CD4-positive, alpha-beta T cell (primary cell): ENCODE measurements at regions of chr1 and their contacts with region 1.

Region 1: DNA sequence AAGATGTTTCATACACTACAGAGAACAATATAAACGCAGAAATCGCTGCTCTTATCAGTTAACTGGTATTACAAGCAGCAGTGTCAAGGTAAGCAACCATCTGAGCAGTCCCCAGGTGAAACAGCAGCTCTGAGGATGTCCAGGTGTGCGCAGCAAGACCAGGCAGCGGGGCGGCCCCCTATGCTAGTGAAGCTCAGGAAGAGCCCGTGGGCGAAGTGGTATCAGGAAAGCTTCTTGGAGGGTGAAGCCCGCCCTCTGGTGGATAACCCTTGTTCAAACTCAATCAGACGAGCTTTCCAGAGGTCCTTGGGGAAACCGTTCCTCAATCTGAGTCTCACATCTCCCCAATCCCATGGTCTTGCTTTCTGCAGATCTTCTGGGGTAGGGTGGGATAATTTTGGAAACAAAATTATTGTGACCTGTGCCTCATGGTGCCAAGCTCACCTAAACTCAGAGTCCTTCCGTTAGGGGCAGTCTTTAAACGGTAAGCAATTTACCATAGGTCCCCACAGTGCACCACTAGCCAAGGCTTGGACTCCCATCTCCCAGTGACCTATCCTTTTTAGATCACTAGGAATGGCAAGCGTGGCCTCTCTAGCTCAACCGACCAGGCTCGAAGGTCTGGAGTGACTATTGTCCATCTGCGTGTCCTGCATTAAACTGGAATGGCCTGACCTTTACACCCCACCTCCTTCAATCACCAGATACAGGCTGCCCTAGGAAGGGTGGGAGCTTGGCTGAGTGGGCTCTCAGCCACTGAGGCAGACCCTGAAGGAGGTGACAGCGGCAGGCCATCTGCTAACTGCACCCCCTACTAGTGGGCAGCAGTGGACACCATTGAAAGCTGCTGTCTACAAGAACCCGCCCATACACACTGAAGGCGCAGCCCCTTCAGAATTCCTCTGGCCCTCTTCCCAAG is 13.6 kb upstream of the FAM110D start:
- DNase-seq: peak; percentile 54 to 91 (median 74)
- ATAC-seq: peak; percentile 97
- H3K4me3 ChIP-seq: no peak overlapping the region
- H3K4me3 Mint-ChIP-seq: no peak overlapping the region
- H3K27ac ChIP-seq: no peak overlapping the region
- H3K27ac Mint-ChIP-seq: no peak overlapping the region
- H3K4me1 ChIP-seq: peaks cover 9% of the 10 kb centered on the region
- H3K4me1 Mint-ChIP-seq: peaks cover 6% of the 10 kb centered on the region
- H3K27me3 ChIP-seq: no peaks in the 10 kb centered on the region
- H3K27me3 Mint-ChIP-seq: no peaks in the 10 kb centered on the region
- CTCF ChIP-seq: peak; percentile 86

Region 2: DNA sequence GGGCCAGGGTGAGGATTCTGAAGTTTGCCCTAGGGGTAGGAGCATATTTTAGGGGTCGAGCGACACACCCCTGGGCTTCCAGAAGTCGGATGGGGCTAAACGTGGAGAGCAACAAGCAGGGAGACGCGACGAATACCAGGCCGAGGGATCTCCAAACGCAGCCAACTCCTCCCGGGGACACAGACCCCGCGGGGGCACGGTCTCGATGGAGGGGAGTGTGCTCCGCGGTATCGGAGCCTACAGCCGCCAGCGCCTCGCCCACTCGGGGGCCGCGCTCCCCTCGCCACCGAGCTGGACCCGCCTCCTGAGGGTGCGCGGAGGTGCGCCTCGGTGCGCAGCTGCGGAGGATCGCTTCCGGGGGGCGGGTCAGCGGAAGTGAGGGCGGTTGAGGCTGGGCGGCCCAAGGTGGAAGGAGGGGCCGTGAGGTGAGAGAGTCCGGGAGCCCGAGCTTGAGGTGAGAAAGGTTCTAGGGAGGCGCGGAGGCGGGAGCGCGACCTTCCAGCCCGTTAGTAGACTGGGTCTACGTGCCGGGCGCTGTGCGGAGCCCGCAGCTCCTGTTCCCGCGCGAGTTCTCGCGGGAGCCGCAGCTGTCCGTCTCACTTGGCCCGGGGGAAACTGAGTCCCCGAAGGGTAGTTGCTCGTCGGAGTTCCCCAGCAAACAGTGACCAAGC is 325.6 kb before region 1 on chr1 and contains the start of gene MTFR1L:
- CTCF ChIA-PET with region 1: no interaction called
- POLR2A ChIA-PET with region 1: no interaction called
- intact Hi-C with region 1: no loop called
- DNase-seq: peak; percentile 87 to 97 (median 93)
- ATAC-seq: peak; percentile 85
- H3K4me3 ChIP-seq: peak within 1 kb of the TSS; percentile 97
- H3K4me3 Mint-ChIP-seq: peak within 1 kb of the TSS; percentile 98
- H3K27ac ChIP-seq: peak within 1 kb of the TSS; percentile 88 to 89
- H3K27ac Mint-ChIP-seq: peak within 1 kb of the TSS; percentile 97
- H3K4me1 ChIP-seq: peaks cover 44% of the 10 kb centered on the region
- H3K4me1 Mint-ChIP-seq: peaks cover 49% of the 10 kb centered on the region
- H3K27me3 ChIP-seq: no peaks in the 10 kb centered on the region
- H3K27me3 Mint-ChIP-seq: no peaks in the 10 kb centered on the region
- CTCF ChIP-seq: no peak
- total RNA-seq, gene MTFR1L: 25.5 to 28.0 TPM

Region 3: GRCh38 chr1:26035959-26036755 is 109.1 kb before region 1 on chr1:
- CTCF ChIA-PET with region 1: interaction called, 9 read pairs
- POLR2A ChIA-PET with region 1: no interaction called
- intact Hi-C with region 1: loop called (anchors 1 kb)
- DNase-seq: peak; percentile 57 to 88 (median 72)
- ATAC-seq: peak; percentile 65
- H3K4me3 ChIP-seq: peak overlapping the region; percentile 99
- H3K4me3 Mint-ChIP-seq: peak overlapping the region; percentile 94
- H3K27ac ChIP-seq: peak overlapping the region; percentile 60 to 75
- H3K27ac Mint-ChIP-seq: peak overlapping the region; percentile 88
- H3K4me1 ChIP-seq: peaks cover 22% of the 10 kb centered on the region
- H3K4me1 Mint-ChIP-seq: peaks cover 17% of the 10 kb centered on the region
- H3K27me3 ChIP-seq: peaks cover 0 to 2% of the 10 kb centered on the region in 2 experiments
- H3K27me3 Mint-ChIP-seq: no peaks in the 10 kb centered on the region
- CTCF ChIP-seq: peak; percentile 100

Region 4: GRCh38 chr1:26046249-26047031 is 98.9 kb before region 1 on chr1:
- CTCF ChIA-PET with region 1: no interaction called
- POLR2A ChIA-PET with region 1: no interaction called
- intact Hi-C with region 1: no loop called
- DNase-seq: no peak
- ATAC-seq: no peak
- H3K4me3 ChIP-seq: no peak overlapping the region
- H3K4me3 Mint-ChIP-seq: no peak overlapping the region
- H3K27ac ChIP-seq: no peak overlapping the region
- H3K27ac Mint-ChIP-seq: no peak overlapping the region
- H3K4me1 ChIP-seq: peaks cover 2% of the 10 kb centered on the region
- H3K4me1 Mint-ChIP-seq: peaks cover 6% of the 10 kb centered on the region
- H3K27me3 ChIP-seq: peaks cover 56 to 59% of the 10 kb centered on the region in 2 experiments
- H3K27me3 Mint-ChIP-seq: peaks cover 82% of the 10 kb centered on the region
- CTCF ChIP-seq: no peak

Region 5: DNA sequence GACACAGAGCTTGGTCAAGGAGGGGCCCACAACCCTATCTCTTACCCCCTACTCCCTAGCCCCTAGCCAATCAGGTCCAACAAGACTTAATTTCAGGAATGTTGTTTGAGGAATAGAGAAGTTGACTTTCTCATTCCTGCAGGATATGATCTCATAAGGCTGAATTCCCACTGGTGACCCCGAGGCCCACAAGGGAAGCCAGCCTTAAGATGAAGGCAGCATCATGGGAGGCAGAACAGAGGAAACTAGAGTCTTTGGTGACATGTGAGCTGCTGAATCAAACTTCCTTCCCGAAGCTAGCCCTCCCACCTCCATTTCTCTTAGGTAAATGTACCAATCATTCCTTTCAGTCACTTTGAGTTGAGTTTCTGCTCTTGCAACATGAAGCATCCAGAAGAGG is 42.8 kb before region 1 on chr1:
- CTCF ChIA-PET with region 1: interaction called, 44 read pairs
- POLR2A ChIA-PET with region 1: interaction called, 25 read pairs
- intact Hi-C with region 1: loop called (anchors 1 kb)
- DNase-seq: no peak
- ATAC-seq: no peak
- H3K4me3 ChIP-seq: no peak overlapping the region
- H3K4me3 Mint-ChIP-seq: no peak overlapping the region
- H3K27ac ChIP-seq: no peak overlapping the region
- H3K27ac Mint-ChIP-seq: no peak overlapping the region
- H3K4me1 ChIP-seq: peaks cover 5% of the 10 kb centered on the region
- H3K4me1 Mint-ChIP-seq: peaks cover 6% of the 10 kb centered on the region
- H3K27me3 ChIP-seq: no peaks in the 10 kb centered on the region
- H3K27me3 Mint-ChIP-seq: no peaks in the 10 kb centered on the region
- CTCF ChIP-seq: no peak

Region 6: DNA sequence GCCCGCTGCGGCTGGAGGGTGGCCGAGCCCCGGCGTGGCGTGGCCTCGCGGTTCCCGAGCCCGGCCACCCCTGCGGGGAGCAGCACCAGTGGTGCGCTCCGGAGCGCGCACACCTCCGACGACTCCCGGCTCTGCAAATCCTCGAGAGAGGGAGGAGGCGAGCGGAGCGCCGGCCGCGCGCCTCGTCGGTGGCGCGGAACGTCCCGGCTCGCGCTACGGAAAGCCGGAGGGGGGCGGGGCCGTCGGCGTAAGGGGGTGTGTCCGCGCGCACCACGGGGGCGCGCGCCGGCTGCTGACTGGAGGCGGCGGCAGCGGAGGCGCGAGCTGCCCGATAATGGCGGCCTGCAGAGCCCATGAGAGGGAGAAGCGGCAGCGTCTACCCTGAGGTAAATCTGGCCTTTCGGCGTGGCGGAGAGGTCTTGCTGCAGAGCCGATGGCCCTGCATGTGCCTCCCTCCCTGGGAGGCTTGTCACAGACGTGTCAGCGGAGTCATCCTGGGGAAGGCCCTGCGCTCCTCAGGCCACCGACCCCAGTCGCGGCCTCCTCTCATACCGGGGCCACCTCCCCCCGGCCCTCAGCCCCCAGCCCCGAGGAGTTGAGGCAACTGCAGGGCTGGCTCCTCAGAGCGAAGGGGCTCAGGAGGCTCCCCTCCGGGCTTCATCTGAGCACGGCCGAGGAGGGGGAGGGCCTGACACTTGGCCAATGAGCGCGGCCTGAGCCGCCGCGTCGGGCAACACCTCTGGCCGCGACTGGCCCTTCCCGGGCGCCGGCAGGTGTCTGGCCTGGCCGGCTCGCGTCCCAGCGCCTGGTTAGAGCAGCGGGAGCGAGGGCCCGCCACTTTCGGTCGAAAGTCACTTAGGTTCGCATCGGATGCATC is 33.5 kb before region 1 on chr1 and contains the start of gene PDIK1L:
- CTCF ChIA-PET with region 1: interaction called, 18 read pairs
- POLR2A ChIA-PET with region 1: interaction called, 20 read pairs
- intact Hi-C with region 1: no loop called
- DNase-seq: peak; percentile 91 to 99 (median 95)
- ATAC-seq: peak; percentile 86
- H3K4me3 ChIP-seq: peak within 1 kb of the TSS; percentile 99
- H3K4me3 Mint-ChIP-seq: peak within 1 kb of the TSS; percentile 96
- H3K27ac ChIP-seq: peak within 1 kb of the TSS; percentile 34 to 73
- H3K27ac Mint-ChIP-seq: peak within 1 kb of the TSS; percentile 92
- H3K4me1 ChIP-seq: peaks cover 24% of the 10 kb centered on the region
- H3K4me1 Mint-ChIP-seq: peaks cover 38% of the 10 kb centered on the region
- H3K27me3 ChIP-seq: no peaks in the 10 kb centered on the region
- H3K27me3 Mint-ChIP-seq: no peaks in the 10 kb centered on the region
- CTCF ChIP-seq: no peak
- total RNA-seq, gene PDIK1L: 9.5 to 9.9 TPM

Region 7: DNA sequence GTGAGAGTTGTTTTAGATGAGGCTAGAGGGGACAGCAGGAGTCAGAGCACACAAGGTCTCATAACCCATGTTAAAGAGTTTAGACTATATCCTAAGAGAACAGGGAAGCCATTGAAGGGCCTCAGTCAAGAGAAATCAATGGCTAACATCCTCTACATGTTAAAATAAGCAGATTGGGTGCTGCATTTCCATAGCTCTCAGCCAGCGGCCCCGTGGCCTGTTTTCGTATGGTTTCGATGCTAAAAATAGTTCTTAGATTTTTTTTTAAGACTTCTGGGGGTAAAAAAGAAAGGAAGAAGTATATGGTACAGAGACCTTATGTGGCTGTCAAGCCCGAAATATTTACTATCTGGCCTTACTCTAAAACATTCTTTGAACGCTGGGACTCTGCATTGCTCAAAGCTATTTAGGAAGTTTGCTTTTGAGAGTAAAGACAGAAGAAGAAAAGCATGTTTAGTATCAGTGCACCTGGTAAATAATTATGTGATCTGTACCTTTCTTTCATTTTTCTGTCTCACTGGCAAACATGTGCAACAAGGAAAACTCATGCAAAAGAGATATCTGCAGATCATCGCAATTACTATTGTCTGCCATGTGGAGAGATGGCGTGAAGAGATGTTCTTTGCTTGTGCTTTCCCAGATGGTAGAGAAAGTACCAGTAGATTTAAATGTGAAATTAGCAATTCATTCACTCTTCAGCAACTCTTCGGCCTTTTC is 25.2 kb before region 1 on chr1:
- CTCF ChIA-PET with region 1: interaction called, 41 read pairs
- POLR2A ChIA-PET with region 1: interaction called, 5 read pairs
- intact Hi-C with region 1: no loop called
- DNase-seq: no peak
- ATAC-seq: no peak
- H3K4me3 ChIP-seq: no peak overlapping the region
- H3K4me3 Mint-ChIP-seq: no peak overlapping the region
- H3K27ac ChIP-seq: no peak overlapping the region
- H3K27ac Mint-ChIP-seq: peak overlapping the region; percentile 57
- H3K4me1 ChIP-seq: no peaks in the 10 kb centered on the region
- H3K4me1 Mint-ChIP-seq: peaks cover 31% of the 10 kb centered on the region
- H3K27me3 ChIP-seq: no peaks in the 10 kb centered on the region
- H3K27me3 Mint-ChIP-seq: no peaks in the 10 kb centered on the region
- CTCF ChIP-seq: no peak

Region 8: GRCh38 chr1:26126321-26127084 is 18.8 kb before region 1 on chr1:
- CTCF ChIA-PET with region 1: interaction called, 41 read pairs
- POLR2A ChIA-PET with region 1: interaction called, 38 read pairs
- intact Hi-C with region 1: loop called (anchors 1 to 2 kb)
- DNase-seq: peak; percentile 23 to 95 (median 38)
- ATAC-seq: peak; percentile 98
- H3K4me3 ChIP-seq: peak overlapping the region; percentile 42
- H3K4me3 Mint-ChIP-seq: peak overlapping the region; percentile 47
- H3K27ac ChIP-seq: peak overlapping the region; percentile 8 to 47
- H3K27ac Mint-ChIP-seq: peak overlapping the region; percentile 86
- H3K4me1 ChIP-seq: peaks cover 17% of the 10 kb centered on the region
- H3K4me1 Mint-ChIP-seq: peaks cover 51% of the 10 kb centered on the region
- H3K27me3 ChIP-seq: no peaks in the 10 kb centered on the region
- H3K27me3 Mint-ChIP-seq: no peaks in the 10 kb centered on the region
- CTCF ChIP-seq: no peak

Region 9: DNA sequence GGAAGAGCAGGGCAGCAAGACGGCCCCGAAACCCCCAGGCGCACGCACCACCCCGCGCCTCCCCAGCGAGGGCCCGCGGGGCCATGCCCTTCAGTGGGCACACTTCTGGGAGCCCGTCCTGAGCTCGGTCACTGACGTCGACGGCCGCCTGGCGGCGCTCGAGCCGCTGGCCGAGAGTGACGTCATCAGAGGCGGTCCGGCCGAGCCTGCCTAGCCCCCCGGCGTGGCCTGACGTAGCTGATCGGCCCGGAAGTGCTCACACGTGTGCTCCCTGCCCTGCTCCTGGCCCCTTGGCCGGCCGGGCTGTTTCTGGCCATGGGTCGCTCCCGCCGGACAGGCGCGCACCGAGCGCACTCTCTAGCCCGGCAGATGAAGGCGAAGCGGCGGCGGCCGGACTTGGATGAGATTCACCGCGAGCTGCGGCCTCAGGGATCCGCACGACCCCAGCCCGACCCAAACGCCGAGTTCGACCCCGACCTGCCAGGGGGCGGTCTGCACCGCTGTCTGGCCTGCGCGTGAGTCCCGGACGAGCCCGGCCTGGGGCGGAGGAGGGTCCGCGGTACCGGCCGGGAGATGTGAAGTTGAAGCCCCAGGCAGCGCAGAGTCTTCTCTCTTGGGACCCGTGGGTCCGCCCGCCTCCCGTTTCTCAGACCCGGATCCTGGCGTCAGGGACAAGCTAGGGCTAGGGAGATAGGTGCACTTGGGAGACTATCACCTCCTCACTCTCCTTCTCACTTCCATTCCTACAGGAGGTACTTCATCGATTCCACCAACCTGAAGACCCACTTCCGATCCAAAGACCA is 24.6 kb after region 1 on chr1 and contains the start of gene ZNF593:
- CTCF ChIA-PET with region 1: interaction called, 13 read pairs
- POLR2A ChIA-PET with region 1: interaction called, 5 read pairs
- intact Hi-C with region 1: no loop called
- DNase-seq: peak; percentile 61 to 91 (median 77)
- ATAC-seq: peak; percentile 86
- H3K4me3 ChIP-seq: peak within 1 kb of the TSS; percentile 85
- H3K4me3 Mint-ChIP-seq: peak within 1 kb of the TSS; percentile 90
- H3K27ac ChIP-seq: peak within 1 kb of the TSS; percentile 58 to 71
- H3K27ac Mint-ChIP-seq: peak within 1 kb of the TSS; percentile 61
- H3K4me1 ChIP-seq: peaks cover 26% of the 10 kb centered on the region
- H3K4me1 Mint-ChIP-seq: peaks cover 12% of the 10 kb centered on the region
- H3K27me3 ChIP-seq: no peaks in the 10 kb centered on the region
- H3K27me3 Mint-ChIP-seq: no peaks in the 10 kb centered on the region
- CTCF ChIP-seq: peak; percentile 90
- total RNA-seq, gene ZNF593: 5.0 to 6.6 TPM

Region 10: GRCh38 chr1:26259578-26259977 is 114.3 kb after region 1 on chr1:
- CTCF ChIA-PET with region 1: no interaction called
- POLR2A ChIA-PET with region 1: no interaction called
- intact Hi-C with region 1: no loop called
- DNase-seq: peak in 2 of 14 experiments; percentile 32 to 35
- ATAC-seq: no peak
- H3K4me3 ChIP-seq: no peak overlapping the region
- H3K4me3 Mint-ChIP-seq: no peak overlapping the region
- H3K27ac ChIP-seq: no peak overlapping the region
- H3K27ac Mint-ChIP-seq: no peak overlapping the region
- H3K4me1 ChIP-seq: no peaks in the 10 kb centered on the region
- H3K4me1 Mint-ChIP-seq: peaks cover 5% of the 10 kb centered on the region
- H3K27me3 ChIP-seq: no peaks in the 10 kb centered on the region
- H3K27me3 Mint-ChIP-seq: no peaks in the 10 kb centered on the region
- CTCF ChIP-seq: no peak